A549 (cell line): ENCODE measurements at regions of chr4 and their contacts with region 1.

Region 1: GRCh38 chr4:168183717-168184608 is 91.6 kb downstream of the ANXA10 start:
- DNase-seq: peak; percentile 14 to 44
- ATAC-seq: peak in 1 of 2 experiments; percentile 65; a peak in 3 of 6 replicates
- H3K4me3 ChIP-seq: no peak overlapping the region
- H3K27ac ChIP-seq: peak overlapping the region; percentile 34 to 66; a peak in 4 of 6 replicates
- H3K4me1 ChIP-seq: peaks cover 8% of the 10 kb centered on the region; the same call in 2 of the 3 replicates
- CTCF ChIP-seq: peak; percentile 73
- EP300 ChIP-seq: no peak
- POLR2A ChIP-seq: no peak
- RAD21 ChIP-seq: peak; percentile 80 to 87

Region 2: GRCh38 chr4:168098257-168098717 is 85.7 kb before region 1 on chr4:
- CTCF ChIA-PET with region 1: no interaction called
- POLR2A ChIA-PET with region 1: no interaction called
- DNase-seq: peak in 1 of 2 experiments; percentile 11
- ATAC-seq: peak; percentile 51 to 55; a peak in 4 of 6 replicates
- H3K4me3 ChIP-seq: no peak overlapping the region
- H3K27ac ChIP-seq: peak overlapping the region; percentile 19 to 40; a peak in 1 of 6 replicates
- H3K4me1 ChIP-seq: peaks cover 40% of the 10 kb centered on the region
- CTCF ChIP-seq: no peak
- EP300 ChIP-seq: peak; percentile 18 to 65; a peak in 1 of 5 replicates
- POLR2A ChIP-seq: no peak
- RAD21 ChIP-seq: no peak

Region 3: GRCh38 chr4:168196248-168196647 is 12.3 kb after region 1 on chr4:
- CTCF ChIA-PET with region 1: interaction called, 20 read pairs
- POLR2A ChIA-PET with region 1: no interaction called
- DNase-seq: no peak
- ATAC-seq: no peak
- H3K4me3 ChIP-seq: no peak overlapping the region
- H3K27ac ChIP-seq: no peak overlapping the region
- H3K4me1 ChIP-seq: peaks cover 10% of the 10 kb centered on the region; the same call in 2 of the 3 replicates
- CTCF ChIP-seq: no peak
- EP300 ChIP-seq: no peak
- POLR2A ChIP-seq: no peak
- RAD21 ChIP-seq: no peak

Region 4: DNA sequence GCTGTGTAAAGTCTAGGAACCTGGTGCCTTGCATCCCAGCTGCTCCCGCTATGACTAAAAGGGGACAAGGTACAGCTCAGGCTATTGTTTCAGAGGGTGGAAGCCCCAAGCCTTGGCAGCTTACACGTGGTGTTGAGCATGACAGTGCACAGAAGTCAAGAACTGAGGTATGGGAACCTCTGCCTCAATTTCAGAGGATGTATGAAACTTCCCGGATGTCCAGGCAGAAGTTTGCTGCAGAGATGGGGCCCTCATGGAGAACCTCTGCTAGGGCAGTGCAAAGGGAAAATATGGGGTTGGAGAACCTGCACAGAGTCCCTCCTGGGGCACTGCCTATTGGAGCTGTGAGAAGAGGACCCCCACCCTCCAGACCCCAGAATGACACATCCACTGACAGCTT is 58.0 kb after region 1 on chr4:
- CTCF ChIA-PET with region 1: no interaction called
- POLR2A ChIA-PET with region 1: no interaction called
- DNase-seq: peak in 1 of 2 experiments; percentile 3
- ATAC-seq: no peak
- H3K4me3 ChIP-seq: no peak overlapping the region
- H3K27ac ChIP-seq: no peak overlapping the region
- H3K4me1 ChIP-seq: no peaks in the 10 kb centered on the region
- CTCF ChIP-seq: no peak
- EP300 ChIP-seq: no peak
- POLR2A ChIP-seq: no peak
- RAD21 ChIP-seq: no peak